ENCODE measurements at regions of chr1 and their contacts with region 1.

Region 1: DNA sequence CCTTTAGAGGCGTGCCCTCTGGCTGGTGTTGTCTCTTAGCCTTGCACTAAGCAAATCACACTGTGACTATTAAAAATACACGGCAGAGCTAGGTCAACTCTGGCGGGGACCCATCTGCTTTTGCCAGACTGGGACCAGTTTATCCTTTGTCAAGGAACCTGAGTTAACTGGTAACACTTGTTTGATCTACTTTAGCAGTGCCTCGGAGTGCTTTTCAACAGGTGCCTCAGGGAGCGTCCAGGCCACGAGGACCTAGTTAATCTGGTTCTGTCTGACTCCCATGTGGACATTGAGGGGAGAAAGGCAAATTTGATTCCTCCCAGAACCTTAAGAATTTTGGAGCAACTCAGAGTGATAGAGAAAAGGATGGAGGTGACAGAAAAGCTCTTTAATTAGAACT is 403.7 kb downstream of the RPS6KC1 start:
- DNase-seq: no peak
- H3K4me3 ChIP-seq: no peak overlapping the region
- H3K27ac ChIP-seq: no peak overlapping the region
- H3K4me1 ChIP-seq: no peaks in the 10 kb centered on the region
- H3K27me3 ChIP-seq: no peaks in the 10 kb centered on the region
- CTCF ChIP-seq: no peak
- EP300 ChIP-seq: no peak
- POLR2A ChIP-seq: no peak

Region 2: GRCh38 chr1:211732293-211732980 is 1722.3 kb before region 1 on chr1:
- intact Hi-C with region 1: no loop called
- DNase-seq: no peak
- H3K4me3 ChIP-seq: no peak overlapping the region
- H3K27ac ChIP-seq: no peak overlapping the region
- H3K4me1 ChIP-seq: peaks cover 5% of the 10 kb centered on the region
- H3K27me3 ChIP-seq: no peaks in the 10 kb centered on the region
- CTCF ChIP-seq: no peak
- EP300 ChIP-seq: no peak
- POLR2A ChIP-seq: no peak

Region 3: DNA sequence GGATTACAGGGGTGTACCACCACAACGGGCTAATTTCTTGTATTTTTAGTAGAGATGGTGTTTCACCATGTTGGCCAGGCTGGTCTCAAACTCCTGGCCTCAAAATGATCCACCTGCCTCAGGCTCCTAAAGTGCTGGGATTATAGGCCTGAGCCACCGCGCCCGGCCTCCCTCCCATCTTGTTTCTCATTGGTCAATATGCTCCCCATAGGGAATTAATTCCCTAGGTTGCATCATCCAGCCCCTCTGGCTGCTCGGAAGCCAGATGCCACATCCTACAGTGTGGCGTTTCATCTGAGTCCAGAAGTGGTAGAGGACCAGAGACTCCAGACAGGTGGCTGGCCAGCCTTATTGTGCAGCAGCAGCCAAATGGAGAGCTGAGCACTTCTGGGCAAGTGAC is 515.9 kb before region 1 on chr1:
- intact Hi-C with region 1: no loop called
- DNase-seq: no peak
- H3K4me3 ChIP-seq: no peak overlapping the region
- H3K27ac ChIP-seq: no peak overlapping the region
- H3K4me1 ChIP-seq: no peaks in the 10 kb centered on the region
- H3K27me3 ChIP-seq: no peaks in the 10 kb centered on the region
- CTCF ChIP-seq: no peak
- EP300 ChIP-seq: no peak
- POLR2A ChIP-seq: no peak

Region 4: DNA sequence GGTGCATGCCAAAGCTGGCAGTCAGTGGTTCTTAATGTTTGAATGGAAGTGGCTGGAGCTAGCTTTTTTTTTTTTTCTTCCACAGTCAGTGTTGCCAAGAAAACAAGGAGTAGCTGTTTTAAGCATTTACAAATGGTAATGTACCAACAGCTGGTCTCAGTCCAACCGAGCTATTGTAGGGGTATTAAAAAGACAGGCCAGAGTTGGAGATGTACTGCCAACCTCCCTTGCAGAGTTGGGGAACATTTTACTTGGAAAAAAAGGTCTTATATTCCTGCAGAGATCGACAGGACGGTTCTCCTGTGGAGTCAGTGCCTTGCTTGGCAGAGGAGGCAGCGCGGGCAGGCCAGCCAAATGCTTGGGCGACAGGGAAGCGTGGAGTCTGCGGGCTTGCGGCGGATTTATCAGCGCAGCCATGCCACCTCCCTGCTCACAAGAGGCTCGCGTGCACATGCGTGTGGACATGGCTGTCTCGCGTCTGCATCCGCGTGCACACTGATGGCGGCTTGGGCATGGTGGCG is 65.7 kb before region 1 on chr1:
- intact Hi-C with region 1: no loop called
- DNase-seq: no peak
- H3K4me3 ChIP-seq: no peak overlapping the region
- H3K27ac ChIP-seq: no peak overlapping the region
- H3K4me1 ChIP-seq: no peaks in the 10 kb centered on the region
- H3K27me3 ChIP-seq: no peaks in the 10 kb centered on the region
- CTCF ChIP-seq: no peak
- EP300 ChIP-seq: no peak
- POLR2A ChIP-seq: no peak

Region 5: DNA sequence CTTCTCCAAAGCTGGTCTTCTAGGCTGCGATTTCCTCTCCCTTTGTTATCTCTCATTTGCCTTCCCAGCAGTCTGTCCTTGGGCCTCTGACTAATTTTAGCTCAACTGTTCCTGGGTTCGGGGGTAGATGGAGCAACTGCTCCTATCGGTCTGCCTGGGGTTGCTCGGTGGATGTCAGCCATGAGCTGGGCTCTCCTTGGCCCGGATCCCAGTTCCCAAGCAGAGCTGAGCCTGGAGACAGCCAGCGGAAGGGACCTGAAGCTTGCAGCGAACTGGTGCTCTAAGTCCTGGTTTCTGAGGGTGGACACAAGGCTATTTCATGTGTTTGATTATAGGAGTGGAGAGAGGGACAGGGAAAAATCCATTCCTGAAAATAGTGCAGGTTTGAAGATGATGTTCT is 19.3 kb after region 1 on chr1:
- intact Hi-C with region 1: loop called in 1 of 4 experiments (anchors 1 kb)
- DNase-seq: peak in 4 of 5 donors; percentile 18 to 52 (median 37)
- H3K4me3 ChIP-seq: no peak overlapping the region
- H3K27ac ChIP-seq: no peak overlapping the region
- H3K4me1 ChIP-seq: peaks cover 6% of the 10 kb centered on the region
- H3K27me3 ChIP-seq: no peaks in the 10 kb centered on the region
- CTCF ChIP-seq: no peak
- EP300 ChIP-seq: no peak
- POLR2A ChIP-seq: no peak

Region 6: GRCh38 chr1:213549982-213550381 is 95.2 kb after region 1 on chr1:
- intact Hi-C with region 1: no loop called
- DNase-seq: no peak
- H3K4me3 ChIP-seq: no peak overlapping the region
- H3K27ac ChIP-seq: no peak overlapping the region
- H3K4me1 ChIP-seq: no peaks in the 10 kb centered on the region
- H3K27me3 ChIP-seq: no peaks in the 10 kb centered on the region
- CTCF ChIP-seq: no peak
- EP300 ChIP-seq: no peak
- POLR2A ChIP-seq: no peak